ENCODE measurements at regions of chr2 and their contacts with region 1.

Region 1: GRCh38 chr2:179264368-179265081 is at the start of gene SESTD1:
- DNase-seq: peak; percentile 57
- H3K4me3 Mint-ChIP-seq: peak within 1 kb of the TSS; percentile 80
- H3K27ac Mint-ChIP-seq: peak within 1 kb of the TSS; percentile 27
- H3K4me1 Mint-ChIP-seq: peaks cover 20% of the 10 kb centered on the region
- H3K27me3 Mint-ChIP-seq: peaks cover 30% of the 10 kb centered on the region
- total RNA-seq, gene SESTD1: 11.3 to 12.4 TPM

Region 2: DNA sequence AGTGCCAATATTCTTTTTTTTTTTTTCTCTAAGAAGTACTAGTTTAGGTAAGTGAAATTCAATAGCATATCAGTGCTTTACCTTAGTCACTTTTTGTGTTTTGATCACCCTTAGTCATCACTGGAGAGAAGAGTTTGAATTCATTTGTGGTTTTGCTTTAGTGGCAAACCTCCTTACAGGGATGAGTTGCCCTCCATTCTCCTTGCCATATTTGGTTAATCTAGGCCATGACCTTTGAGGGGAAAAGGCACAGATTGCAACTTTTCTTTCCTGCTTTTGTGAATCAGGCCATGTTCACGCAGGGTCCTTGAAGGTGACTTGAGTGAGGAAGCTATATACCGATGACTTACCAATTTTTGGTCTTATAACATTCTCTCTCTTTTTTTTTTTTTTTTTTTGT is 749.9 kb before region 1 on chr2:
- CTCF ChIA-PET with region 1: no interaction called
- intact Hi-C with region 1: loop called (anchors 10 kb)
- DNase-seq: peak; percentile 69
- H3K4me3 Mint-ChIP-seq: no peak overlapping the region
- H3K27ac Mint-ChIP-seq: peak overlapping the region; percentile 65
- H3K4me1 Mint-ChIP-seq: peaks cover 25% of the 10 kb centered on the region
- H3K27me3 Mint-ChIP-seq: no peaks in the 10 kb centered on the region

Region 3: GRCh38 chr2:179049546-179050311 is 214.8 kb before region 1 on chr2 and contains the start of gene CCDC141:
- CTCF ChIA-PET with region 1: no interaction called
- intact Hi-C with region 1: loop called (anchors 5 kb)
- DNase-seq: peak; percentile 50
- H3K4me3 Mint-ChIP-seq: peak within 1 kb of the TSS; percentile 86
- H3K27ac Mint-ChIP-seq: peak within 1 kb of the TSS; percentile 81
- H3K4me1 Mint-ChIP-seq: peaks cover 55% of the 10 kb centered on the region
- H3K27me3 Mint-ChIP-seq: no peaks in the 10 kb centered on the region
- total RNA-seq, gene CCDC141: 2.6 to 4.6 TPM

Region 4: GRCh38 chr2:179106676-179107428 is 157.7 kb before region 1 on chr2:
- CTCF ChIA-PET with region 1: no interaction called
- intact Hi-C with region 1: loop called (anchors 5 kb)
- DNase-seq: peak; percentile 21
- H3K4me3 Mint-ChIP-seq: no peak overlapping the region
- H3K27ac Mint-ChIP-seq: no peak overlapping the region
- H3K4me1 Mint-ChIP-seq: peaks cover 30% of the 10 kb centered on the region
- H3K27me3 Mint-ChIP-seq: no peaks in the 10 kb centered on the region

Region 5: DNA sequence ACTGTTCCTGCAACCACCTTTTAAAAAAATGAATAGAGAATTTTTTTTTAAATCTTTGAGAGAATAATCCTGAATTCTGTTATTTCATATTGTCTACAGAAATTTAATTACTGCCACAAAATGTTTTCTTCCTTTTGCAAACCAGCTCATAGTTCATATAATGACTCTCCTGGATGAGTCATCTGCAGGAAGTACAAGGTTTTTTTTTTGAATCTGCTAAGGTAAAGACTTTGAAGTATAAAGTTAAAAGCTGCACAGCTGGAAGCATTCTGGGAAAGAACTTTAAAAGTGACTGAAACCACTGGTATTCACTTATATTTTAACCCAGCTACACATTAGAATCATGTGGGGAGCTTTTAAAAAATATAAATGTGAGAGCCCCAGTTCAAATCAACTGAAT is 25.3 kb before region 1 on chr2:
- CTCF ChIA-PET with region 1: no interaction called
- intact Hi-C with region 1: loop called (anchors 1 kb)
- DNase-seq: no peak
- H3K4me3 Mint-ChIP-seq: no peak overlapping the region
- H3K27ac Mint-ChIP-seq: no peak overlapping the region
- H3K4me1 Mint-ChIP-seq: peaks cover 27% of the 10 kb centered on the region
- H3K27me3 Mint-ChIP-seq: peaks cover 2% of the 10 kb centered on the region

Region 6: DNA sequence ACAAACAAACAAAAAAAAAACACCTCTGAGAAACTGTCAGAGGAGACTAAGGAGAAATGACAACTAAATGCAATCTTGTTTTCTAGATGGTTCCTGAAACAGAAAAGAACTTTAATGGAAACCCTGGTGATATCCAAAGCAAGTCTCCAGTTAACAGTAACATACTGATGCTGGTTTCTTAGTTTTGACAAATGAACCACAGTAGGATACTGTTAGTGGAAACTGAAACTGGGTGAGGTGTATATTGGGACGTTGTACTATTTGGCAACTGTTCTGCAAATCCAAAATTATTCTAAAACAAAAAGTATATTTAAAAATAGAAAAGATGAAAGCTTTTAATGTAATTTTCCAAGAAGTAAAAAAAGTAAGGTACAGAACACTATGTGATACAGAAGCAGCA is 11.3 kb before region 1 on chr2:
- CTCF ChIA-PET with region 1: interaction called, 4 read pairs
- intact Hi-C with region 1: loop called (anchors 1 kb)
- DNase-seq: no peak
- H3K4me3 Mint-ChIP-seq: no peak overlapping the region
- H3K27ac Mint-ChIP-seq: no peak overlapping the region
- H3K4me1 Mint-ChIP-seq: peaks cover 40% of the 10 kb centered on the region
- H3K27me3 Mint-ChIP-seq: peaks cover 4% of the 10 kb centered on the region

Region 7: DNA sequence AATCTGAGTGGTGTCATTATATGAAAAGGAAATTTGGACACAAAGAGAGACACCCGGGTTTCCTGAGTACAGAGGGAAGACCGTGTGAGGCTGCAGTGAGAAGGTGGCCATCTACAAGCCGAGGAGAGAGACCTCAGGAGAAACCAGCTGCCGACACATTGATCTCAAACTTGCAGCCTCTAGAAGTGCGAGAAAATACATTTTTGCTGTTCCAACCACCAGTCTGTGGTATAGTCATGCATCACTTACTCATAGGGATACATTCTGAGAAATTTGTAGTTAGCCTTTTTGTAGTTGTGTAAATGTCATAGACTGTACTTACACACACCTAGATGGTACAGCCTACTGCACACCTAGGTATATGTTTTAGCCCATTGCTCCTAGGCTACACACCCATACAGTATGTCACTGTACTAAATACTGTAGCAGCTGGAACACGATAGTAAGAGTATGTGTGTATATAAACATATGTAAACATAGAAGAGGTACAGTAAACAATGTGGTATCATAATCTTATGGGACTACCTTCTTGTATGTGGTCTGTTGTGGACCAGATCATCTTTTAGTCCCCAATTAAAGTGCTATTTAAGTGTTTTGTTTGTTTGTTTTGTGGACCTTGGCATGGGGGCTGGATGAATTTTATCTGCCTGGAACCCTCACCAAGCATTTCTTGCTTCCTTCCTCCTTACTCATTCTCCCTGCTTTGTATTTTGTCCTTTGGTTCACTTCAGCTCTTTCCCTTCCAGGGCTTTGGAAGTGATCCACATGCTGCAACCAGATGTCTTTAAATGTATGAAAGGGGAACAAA is 38.4 kb after region 1 on chr2:
- CTCF ChIA-PET with region 1: no interaction called
- intact Hi-C with region 1: no loop called
- DNase-seq: no peak
- H3K4me3 Mint-ChIP-seq: no peak overlapping the region
- H3K27ac Mint-ChIP-seq: no peak overlapping the region
- H3K4me1 Mint-ChIP-seq: no peaks in the 10 kb centered on the region
- H3K27me3 Mint-ChIP-seq: peaks cover 2% of the 10 kb centered on the region

Region 8: GRCh38 chr2:180006781-180007579 is 742.5 kb after region 1 on chr2 and contains the start of gene CWC22:
- CTCF ChIA-PET with region 1: no interaction called
- intact Hi-C with region 1: loop called (anchors 10 kb)
- DNase-seq: peak; percentile 93
- H3K4me3 Mint-ChIP-seq: peak within 1 kb of the TSS; percentile 92
- H3K27ac Mint-ChIP-seq: peak within 1 kb of the TSS; percentile 100
- H3K4me1 Mint-ChIP-seq: peaks cover 36% of the 10 kb centered on the region
- H3K27me3 Mint-ChIP-seq: no peaks in the 10 kb centered on the region
- total RNA-seq, gene CWC22: 20.4 TPM